ENCODE measurements at regions of chrX and their contacts with region 1.

Region 1: DNA sequence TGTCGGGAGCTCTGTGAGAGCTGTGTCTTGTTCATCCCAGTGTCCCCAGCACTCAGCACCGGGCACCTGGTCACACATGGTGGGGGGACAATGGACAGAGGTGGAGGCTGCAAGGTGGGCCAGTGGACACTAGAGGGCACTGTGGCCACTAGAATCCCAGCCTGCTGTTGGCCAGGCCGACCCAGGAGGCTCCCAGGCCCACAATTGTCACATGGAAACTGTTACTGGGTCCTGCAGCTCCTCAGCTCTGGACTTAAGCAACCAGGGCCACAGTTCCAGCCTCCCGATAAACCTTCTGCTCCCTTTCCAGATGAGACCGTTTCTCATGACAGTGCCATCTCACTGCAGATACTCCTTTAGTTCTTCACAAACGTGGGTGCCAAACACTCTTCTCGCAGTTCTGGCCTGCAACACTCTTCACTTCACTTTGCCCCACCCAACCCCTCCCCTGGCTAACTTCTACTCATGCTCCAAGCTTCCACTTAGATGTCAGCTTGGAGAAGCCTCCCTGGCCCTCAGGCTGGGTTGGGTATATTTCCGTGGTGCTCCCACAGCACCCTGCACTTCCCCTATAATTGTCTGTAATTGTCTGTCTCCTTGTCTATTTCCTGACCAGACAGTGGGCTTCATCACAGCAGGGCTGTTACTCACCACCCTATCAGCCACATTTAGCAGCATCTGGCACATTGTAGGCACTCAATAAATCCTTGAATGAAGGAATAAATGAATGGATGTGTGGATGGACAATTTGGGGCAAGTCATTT is 3.5 kb upstream of the IQSEC2 start:
- H3K4me3 ChIP-seq: no peak overlapping the region
- H3K27ac ChIP-seq: no peak overlapping the region
- H3K4me1 ChIP-seq: peaks cover 29% of the 10 kb centered on the region
- CTCF ChIP-seq: peak; percentile 90

Region 2: GRCh38 chrX:53224860-53225797 is 59.7 kb before region 1 on chrX and contains the start of gene KDM5C:
- CTCF ChIA-PET with region 1: interaction called, 15 read pairs
- POLR2A ChIA-PET with region 1: interaction called, 23 read pairs
- H3K4me3 ChIP-seq: peak within 1 kb of the TSS; percentile 90
- H3K27ac ChIP-seq: peak within 1 kb of the TSS; percentile 96
- H3K4me1 ChIP-seq: peaks cover 19% of the 10 kb centered on the region
- CTCF ChIP-seq: peak; percentile 55; the same call in 1 of the 2 replicates

Region 3: GRCh38 chrX:53244610-53245009 is 40.3 kb before region 1 on chrX:
- CTCF ChIA-PET with region 1: interaction called, 13 read pairs
- POLR2A ChIA-PET with region 1: no interaction called
- H3K4me3 ChIP-seq: no peak overlapping the region
- H3K27ac ChIP-seq: no peak overlapping the region
- H3K4me1 ChIP-seq: no peaks in the 10 kb centered on the region
- CTCF ChIP-seq: no peak

Region 4: DNA sequence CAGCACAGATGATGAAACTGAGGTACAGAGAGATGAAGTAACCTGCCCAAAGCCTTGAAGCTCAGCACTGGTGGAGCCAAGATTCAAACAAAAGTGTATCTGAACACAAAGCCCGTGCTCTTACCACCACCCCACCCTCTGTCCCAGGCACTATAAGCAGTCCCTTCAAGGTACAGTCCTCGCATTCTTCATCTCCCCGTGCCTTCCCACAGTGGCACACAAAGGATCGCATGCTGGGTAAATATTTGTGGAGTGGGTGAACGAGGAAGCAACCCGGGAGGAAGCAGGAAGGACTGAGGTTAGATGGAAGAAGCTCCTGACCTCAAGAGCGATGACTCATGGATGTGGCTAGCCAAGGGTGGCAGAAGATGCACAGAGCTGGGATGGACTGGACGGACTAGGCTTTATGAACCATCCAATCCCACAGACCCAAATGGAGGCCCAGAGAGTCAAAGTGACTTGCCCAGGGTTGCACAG is 21.9 kb before region 1 on chrX:
- CTCF ChIA-PET with region 1: interaction called, 15 read pairs
- POLR2A ChIA-PET with region 1: interaction called, 11 read pairs
- H3K4me3 ChIP-seq: no peak overlapping the region
- H3K27ac ChIP-seq: no peak overlapping the region
- H3K4me1 ChIP-seq: peaks cover 2% of the 10 kb centered on the region; the same call in 1 of the 2 replicates
- CTCF ChIP-seq: no peak

Region 5: DNA sequence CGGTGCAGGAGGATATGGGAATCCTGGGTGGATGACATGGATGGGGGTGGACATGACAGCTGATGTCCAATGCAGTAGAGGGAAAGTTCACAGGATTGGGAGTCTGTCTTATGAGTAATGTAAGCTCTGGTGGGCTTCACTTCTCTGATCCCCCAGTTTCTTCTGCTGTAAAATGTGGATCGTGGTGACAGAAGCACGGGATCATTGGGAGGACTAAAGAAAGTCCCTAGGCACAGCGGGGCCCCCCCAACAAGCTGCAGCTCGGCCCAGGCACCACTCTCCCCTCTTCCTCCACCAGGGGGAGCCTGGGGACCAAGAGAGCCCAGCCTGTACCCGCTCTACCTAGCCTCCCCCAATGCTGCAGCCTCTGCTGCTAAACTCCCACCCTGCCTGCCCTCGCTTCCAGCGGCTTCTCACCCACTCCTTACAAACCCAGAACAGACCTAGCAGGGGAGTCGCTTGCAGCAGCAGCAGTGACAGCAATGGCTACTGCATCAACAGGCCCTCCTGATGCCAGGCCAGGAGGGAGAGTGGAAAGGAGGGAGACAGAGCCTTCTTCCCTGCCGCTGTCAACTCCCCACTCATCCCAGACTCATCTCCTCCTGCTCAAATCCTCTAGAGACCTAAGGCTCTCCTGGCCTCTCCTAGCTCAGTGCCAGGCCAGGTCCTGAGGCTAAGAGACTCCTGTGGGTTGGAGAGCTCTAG is 32.7 kb after region 1 on chrX:
- CTCF ChIA-PET with region 1: interaction called, 100 read pairs
- POLR2A ChIA-PET with region 1: interaction called, 3 read pairs
- H3K4me3 ChIP-seq: no peak overlapping the region
- H3K27ac ChIP-seq: peak overlapping the region; percentile 38; the same call in 1 of the 2 replicates
- H3K4me1 ChIP-seq: peaks cover 32% of the 10 kb centered on the region
- CTCF ChIP-seq: peak; percentile 96

Region 6: GRCh38 chrX:53422086-53422860 is 137.4 kb after region 1 on chrX and contains the start of gene SMC1A:
- CTCF ChIA-PET with region 1: interaction called, 9 read pairs
- POLR2A ChIA-PET with region 1: interaction called, 13 read pairs
- H3K4me3 ChIP-seq: peak within 1 kb of the TSS; percentile 76
- H3K27ac ChIP-seq: peak within 1 kb of the TSS; percentile 99
- H3K4me1 ChIP-seq: peaks cover 6% of the 10 kb centered on the region
- CTCF ChIP-seq: peak; percentile 30; the same call in 1 of the 2 replicates

Region 7: GRCh38 chrX:53441531-53442321 is 156.9 kb after region 1 on chrX:
- CTCF ChIA-PET with region 1: interaction called, 27 read pairs
- POLR2A ChIA-PET with region 1: interaction called, 6 read pairs
- H3K4me3 ChIP-seq: peak overlapping the region; percentile 48
- H3K27ac ChIP-seq: peak overlapping the region; percentile 61; the same call in 1 of the 2 replicates
- H3K4me1 ChIP-seq: peaks cover 3% of the 10 kb centered on the region; the same call in 1 of the 2 replicates
- CTCF ChIP-seq: no peak